ENCODE measurements at regions of chr5 and their contacts with region 1.

Region 1: GRCh38 chr5:43019614-43020293 is 20.4 kb downstream of the ANXA2R start:
- DNase-seq: peak; percentile 47
- H3K4me3 ChIP-seq: peak overlapping the region; percentile 65 to 69
- H3K27ac ChIP-seq: peak overlapping the region; percentile 8 to 90; a peak in 3 of 4 replicates
- H3K4me1 ChIP-seq: peaks cover 5 to 11% of the 10 kb centered on the region in 2 experiments; a peak in 2 of 4 replicates
- H3K27me3 ChIP-seq: no peaks in the 10 kb centered on the region
- CTCF ChIP-seq: peak; percentile 60
- EP300 ChIP-seq: no peak
- RAD21 ChIP-seq: no peak

Region 2: GRCh38 chr5:42349163-42349562 is 670.6 kb before region 1 on chr5:
- CTCF ChIA-PET with region 1: no interaction called
- POLR2A ChIA-PET with region 1: no interaction called
- DNase-seq: no peak
- H3K4me3 ChIP-seq: no peak overlapping the region
- H3K27ac ChIP-seq: no peak overlapping the region
- H3K4me1 ChIP-seq: no peaks in the 10 kb centered on the region
- H3K27me3 ChIP-seq: no peaks in the 10 kb centered on the region
- CTCF ChIP-seq: no peak
- EP300 ChIP-seq: no peak
- RAD21 ChIP-seq: no peak

Region 3: DNA sequence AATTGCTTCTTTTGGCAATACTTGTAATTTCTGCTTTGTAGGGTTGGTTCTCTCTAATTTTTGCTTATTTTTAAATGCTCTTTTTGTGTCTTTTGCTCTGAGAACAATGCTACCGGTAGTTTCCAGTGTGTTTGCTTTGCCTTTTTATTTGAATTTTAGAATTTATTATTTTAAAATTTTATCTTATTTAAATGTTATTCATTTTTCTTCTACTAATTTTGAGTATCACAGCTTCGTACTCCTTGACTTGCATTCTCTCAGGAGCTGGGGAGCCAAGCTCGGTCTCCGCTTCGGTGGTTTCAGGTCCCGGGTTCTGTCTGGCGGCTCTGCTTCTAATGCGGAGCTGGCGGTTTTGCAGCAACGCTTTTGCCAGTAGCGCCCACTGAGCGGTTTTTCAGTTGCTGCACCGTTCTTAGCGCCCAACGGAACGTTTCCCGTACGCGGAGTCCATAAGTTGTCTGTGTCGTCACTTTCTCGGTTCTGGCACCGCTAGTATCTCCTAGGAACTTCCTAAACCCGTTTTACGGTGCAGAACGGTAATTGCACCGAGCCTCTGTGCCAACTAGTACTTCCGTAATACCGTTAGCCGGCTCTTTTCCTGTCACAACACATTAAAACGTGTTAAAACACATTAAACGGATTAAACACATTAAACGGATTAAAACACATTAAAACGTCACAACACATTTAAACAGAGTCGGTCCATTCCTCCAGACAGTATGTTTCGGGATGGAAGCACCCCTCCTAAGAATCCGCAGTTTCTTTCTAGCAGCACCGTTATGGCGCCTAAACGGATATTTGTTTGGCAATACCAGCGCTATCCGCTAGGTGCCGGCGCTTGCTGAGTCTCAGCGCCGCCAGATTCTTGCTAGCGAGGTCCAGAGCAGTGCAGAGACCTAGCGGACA is 25.3 kb before region 1 on chr5:
- CTCF ChIA-PET with region 1: interaction called, 14 read pairs
- POLR2A ChIA-PET with region 1: interaction called, 3 read pairs
- DNase-seq: peak; percentile 74
- H3K4me3 ChIP-seq: peak overlapping the region; percentile 45 to 65
- H3K27ac ChIP-seq: peak overlapping the region; percentile 64 to 85; a peak in 3 of 4 replicates
- H3K4me1 ChIP-seq: peaks cover 0 to 3% of the 10 kb centered on the region in 2 experiments; a peak in 1 of 4 replicates
- H3K27me3 ChIP-seq: peaks cover 48% of the 10 kb centered on the region; the same call in 1 of the 2 replicates
- CTCF ChIP-seq: peak; percentile 73
- EP300 ChIP-seq: no peak
- RAD21 ChIP-seq: peak; percentile 65

Region 4: DNA sequence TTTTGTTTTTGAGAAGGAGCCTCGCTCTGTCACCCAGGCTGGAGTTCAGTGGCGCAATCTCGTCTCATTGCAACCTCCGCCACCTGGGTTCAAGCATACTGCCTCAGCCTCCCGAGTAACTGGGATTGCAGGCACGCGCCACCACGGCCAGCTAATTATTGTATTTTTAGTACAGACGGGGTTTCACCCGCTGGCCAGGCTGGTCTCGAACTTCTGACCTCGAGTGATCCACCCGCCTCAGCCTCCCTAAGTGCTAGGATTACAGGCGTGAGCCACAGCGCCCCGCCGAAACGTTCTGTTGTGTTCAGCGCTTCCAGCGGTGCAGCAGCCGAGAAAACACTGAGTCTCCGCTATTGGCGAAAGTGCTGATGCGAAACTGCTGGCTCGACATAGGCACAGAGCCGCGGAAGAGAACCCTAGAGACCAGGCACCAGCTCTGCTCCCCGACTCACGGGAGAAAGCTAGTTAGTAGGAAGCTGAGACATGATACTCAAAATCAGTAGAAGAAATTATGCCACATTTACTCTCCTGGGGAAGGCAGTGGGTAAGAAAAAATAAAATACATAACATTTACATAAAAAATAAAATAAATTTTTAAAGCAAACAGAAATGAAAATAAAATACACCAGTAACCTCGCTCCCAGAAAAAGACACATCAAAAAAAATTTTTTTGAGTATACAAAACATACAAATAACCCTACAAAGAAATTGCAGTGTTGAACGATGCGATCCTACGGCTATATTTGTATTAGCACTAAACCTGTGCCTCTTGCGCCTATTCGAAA is 11.2 kb before region 1 on chr5:
- CTCF ChIA-PET with region 1: interaction called, 12 read pairs
- POLR2A ChIA-PET with region 1: no interaction called
- DNase-seq: peak; percentile 73
- H3K4me3 ChIP-seq: peak overlapping the region; percentile 51 to 60
- H3K27ac ChIP-seq: peak overlapping the region; percentile 83 to 90
- H3K4me1 ChIP-seq: peaks cover 0 to 4% of the 10 kb centered on the region in 2 experiments; a peak in 1 of 4 replicates
- H3K27me3 ChIP-seq: no peaks in the 10 kb centered on the region
- CTCF ChIP-seq: 0 out of 2 replicates have a peak, but pooled peaks have one; percentile 31
- EP300 ChIP-seq: peak; percentile 46 to 82; a peak in 3 of 4 replicates
- RAD21 ChIP-seq: no peak

Region 5: GRCh38 chr5:43040287-43041098 is 20.7 kb after region 1 on chr5 and contains the start of gene ANXA2R:
- CTCF ChIA-PET with region 1: interaction called, 14 read pairs
- POLR2A ChIA-PET with region 1: no interaction called
- DNase-seq: peak; percentile 62
- H3K4me3 ChIP-seq: peak within 1 kb of the TSS; percentile 58 to 72
- H3K27ac ChIP-seq: peak within 1 kb of the TSS; percentile 77 to 93; a peak in 3 of 4 replicates
- H3K4me1 ChIP-seq: peaks cover 0 to 24% of the 10 kb centered on the region in 2 experiments; a peak in 1 of 4 replicates
- H3K27me3 ChIP-seq: no peaks in the 10 kb centered on the region
- CTCF ChIP-seq: peak; percentile 70
- EP300 ChIP-seq: no peak
- RAD21 ChIP-seq: peak; percentile 72
- polyA plus RNA-seq, gene ANXA2R: 1.7 and 1.9 TPM in 2 replicates

Region 6: DNA sequence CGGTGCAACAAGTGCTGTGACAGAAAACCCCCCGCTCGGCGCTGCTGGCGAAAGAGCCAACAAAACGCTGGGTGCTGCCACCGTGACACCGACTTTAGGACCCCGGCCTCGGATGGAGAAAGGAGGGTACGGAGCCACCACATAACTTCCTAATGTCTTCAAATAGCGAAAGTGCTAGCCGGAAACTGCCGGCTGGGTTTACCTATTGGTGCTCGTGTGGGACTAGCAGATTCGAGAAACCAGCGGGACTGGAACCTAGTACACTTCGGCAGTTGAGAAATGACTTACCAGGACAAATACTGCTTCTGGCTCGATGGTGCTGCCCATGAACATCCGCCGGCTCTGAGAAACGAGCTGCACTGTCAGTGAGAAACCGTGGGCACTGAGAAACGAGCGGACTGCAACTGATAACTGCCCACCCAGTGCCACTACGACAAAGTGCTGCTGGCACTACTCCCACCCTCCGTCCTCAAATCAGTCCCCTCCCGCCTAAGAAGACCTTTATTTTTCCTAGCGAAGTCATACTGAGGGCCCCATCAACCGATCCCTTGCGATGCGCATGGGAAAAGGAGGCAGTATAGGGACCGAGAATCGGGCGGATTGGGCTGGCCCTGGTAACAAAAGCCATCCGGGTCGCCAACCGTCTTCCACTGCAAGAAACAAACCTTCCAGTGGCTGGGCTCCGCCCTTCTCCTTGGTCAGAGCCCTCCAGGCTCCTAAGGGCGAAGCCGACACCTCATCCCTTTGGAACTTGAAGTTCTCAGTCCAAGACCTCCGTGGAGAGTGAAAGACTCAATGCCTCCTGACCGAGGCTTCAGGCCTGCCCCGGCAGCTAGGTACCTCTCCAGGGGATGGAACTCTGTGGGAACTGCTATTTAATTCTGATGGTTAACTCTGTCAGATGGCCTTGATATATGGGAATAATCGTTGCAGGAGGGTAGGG is 47.3 kb after region 1 on chr5:
- CTCF ChIA-PET with region 1: interaction called, 14 read pairs
- POLR2A ChIA-PET with region 1: no interaction called
- DNase-seq: peak; percentile 68
- H3K4me3 ChIP-seq: peak overlapping the region; percentile 80 to 84
- H3K27ac ChIP-seq: peak overlapping the region; percentile 90 to 97
- H3K4me1 ChIP-seq: peaks cover 11 to 13% of the 10 kb centered on the region in 2 experiments; a peak in 3 of 4 replicates
- H3K27me3 ChIP-seq: no peaks in the 10 kb centered on the region
- CTCF ChIP-seq: no peak
- EP300 ChIP-seq: peak; percentile 83 to 97; a peak in 3 of 4 replicates
- RAD21 ChIP-seq: no peak